AG04449 (cell line): ENCODE measurements at regions of chr1 and their contacts with region 1.

Region 1: DNA sequence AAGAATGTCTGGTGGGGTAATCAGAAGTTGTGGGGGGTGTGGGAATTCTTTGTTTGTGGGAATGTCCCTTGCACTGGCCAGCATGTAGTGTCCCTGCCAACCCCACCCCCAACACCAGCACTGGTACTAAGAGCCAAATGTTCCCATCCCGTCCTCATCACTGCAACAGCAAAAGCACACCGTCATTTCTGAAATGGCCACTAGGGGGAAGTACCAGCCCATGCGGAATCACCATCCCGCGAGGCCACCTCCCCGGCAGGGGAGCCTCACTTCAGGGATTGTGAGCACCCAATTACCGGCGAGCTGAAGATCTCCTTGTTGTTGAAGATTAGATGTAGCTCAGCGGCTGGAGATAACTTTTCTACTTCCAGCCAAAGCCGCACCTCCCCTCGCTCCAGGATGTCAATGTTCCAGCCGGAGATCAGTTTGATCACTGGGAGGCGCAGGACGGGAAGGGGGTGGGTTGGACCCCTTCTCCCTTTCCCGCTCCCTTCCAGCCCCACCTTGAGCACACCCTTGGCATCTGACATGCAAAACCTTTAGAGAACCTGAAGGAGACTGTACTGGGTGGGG is 41.0 kb downstream of the MYOM3 start:
- DNase-seq: no peak
- H3K4me3 ChIP-seq: no peak overlapping the region
- CTCF ChIP-seq: peak; percentile 87

Region 2: DNA sequence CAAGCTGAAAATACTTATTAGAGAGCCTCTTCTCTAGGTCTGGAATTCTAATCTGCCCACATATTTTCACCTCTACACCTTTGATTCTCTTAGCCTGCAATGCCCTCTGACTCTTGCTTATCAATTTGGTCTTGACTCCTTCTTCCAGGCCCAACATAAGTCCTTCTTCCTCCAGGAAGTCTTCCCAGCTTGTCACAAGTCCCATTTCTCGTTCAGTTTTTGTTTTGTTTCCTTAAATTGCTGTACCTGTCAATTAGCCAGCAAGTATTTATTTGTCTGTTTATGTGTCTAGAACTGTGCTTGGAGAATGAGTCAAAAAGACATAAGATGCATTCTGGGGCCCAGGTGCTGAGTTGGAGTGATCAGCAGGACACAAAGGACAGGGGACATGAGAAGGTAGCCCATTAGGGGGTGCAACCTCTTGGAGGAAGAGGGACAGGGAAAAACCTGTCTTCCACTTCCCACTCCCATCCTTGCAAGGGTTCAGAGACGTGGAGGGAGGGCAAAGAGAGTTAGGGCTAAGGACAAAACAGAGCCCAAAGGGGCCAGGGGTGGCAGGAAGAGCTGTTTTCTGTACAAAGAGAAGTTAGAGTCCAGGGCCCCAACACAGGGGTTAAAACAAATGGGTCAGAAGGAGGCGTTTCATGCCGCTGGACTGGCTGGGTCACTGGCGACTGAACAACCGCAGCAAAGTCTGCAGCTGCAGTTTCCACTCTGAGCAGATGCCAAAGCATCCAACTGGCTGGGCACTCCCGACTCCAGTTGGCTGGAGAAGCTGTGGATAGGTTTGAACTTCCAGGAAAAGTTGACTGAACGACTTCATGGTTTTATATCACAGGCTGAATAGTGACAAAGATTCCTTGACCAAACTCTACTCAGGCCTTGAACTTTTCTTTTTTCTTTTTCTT is 147.1 kb before region 1 on chr1:
- CTCF ChIA-PET with region 1: no interaction called
- POLR2A ChIA-PET with region 1: no interaction called
- DNase-seq: no peak
- H3K4me3 ChIP-seq: no peak overlapping the region
- CTCF ChIP-seq: no peak

Region 3: DNA sequence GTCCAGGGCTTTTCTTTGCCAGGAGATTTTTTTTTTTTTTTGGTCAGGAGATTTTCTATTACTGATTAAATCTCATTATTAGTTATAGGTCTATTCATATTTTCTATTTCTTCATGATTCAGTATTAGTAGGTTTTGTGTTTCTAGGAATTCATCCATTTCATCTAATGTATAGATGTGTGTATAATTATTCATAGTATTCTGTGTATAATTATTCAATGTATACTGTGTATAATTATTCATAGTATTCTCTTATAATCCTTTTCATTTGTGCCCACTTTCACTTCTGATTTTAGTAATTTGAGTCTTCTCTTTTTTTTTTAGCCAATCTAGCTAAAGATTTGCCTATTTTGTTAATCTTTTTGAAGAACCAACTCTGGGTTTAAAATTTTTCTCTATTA is 123.5 kb before region 1 on chr1:
- CTCF ChIA-PET with region 1: no interaction called
- POLR2A ChIA-PET with region 1: no interaction called
- DNase-seq: no peak
- H3K4me3 ChIP-seq: no peak overlapping the region
- CTCF ChIP-seq: no peak

Region 4: GRCh38 chr1:24027838-24028468 is 43.0 kb before region 1 on chr1:
- CTCF ChIA-PET with region 1: no interaction called
- POLR2A ChIA-PET with region 1: no interaction called
- DNase-seq: no peak
- H3K4me3 ChIP-seq: no peak overlapping the region
- CTCF ChIP-seq: peak; percentile 54

Region 5: GRCh38 chr1:24058671-24059455 is 12.0 kb before region 1 on chr1:
- CTCF ChIA-PET with region 1: interaction called, 37 read pairs
- POLR2A ChIA-PET with region 1: no interaction called
- DNase-seq: no peak
- H3K4me3 ChIP-seq: no peak overlapping the region
- CTCF ChIP-seq: no peak

Region 6: GRCh38 chr1:24085546-24085945 is 14.6 kb after region 1 on chr1:
- CTCF ChIA-PET with region 1: interaction called, 68 read pairs
- POLR2A ChIA-PET with region 1: no interaction called
- DNase-seq: no peak
- H3K4me3 ChIP-seq: no peak overlapping the region
- CTCF ChIP-seq: no peak

Region 7: GRCh38 chr1:24102961-24103360 is 32.1 kb after region 1 on chr1:
- CTCF ChIA-PET with region 1: interaction called, 10 read pairs
- POLR2A ChIA-PET with region 1: no interaction called
- DNase-seq: no peak
- H3K4me3 ChIP-seq: no peak overlapping the region
- CTCF ChIP-seq: no peak

Region 8: GRCh38 chr1:24111996-24112779 is 41.3 kb after region 1 on chr1 and contains the start of gene MYOM3:
- CTCF ChIA-PET with region 1: interaction called, 25 read pairs
- POLR2A ChIA-PET with region 1: no interaction called
- DNase-seq: no peak
- H3K4me3 ChIP-seq: peak within 1 kb of the TSS; percentile 32
- CTCF ChIP-seq: peak; percentile 65